ENCODE measurements at regions of chr2 and their contacts with region 1.

Region 1: DNA sequence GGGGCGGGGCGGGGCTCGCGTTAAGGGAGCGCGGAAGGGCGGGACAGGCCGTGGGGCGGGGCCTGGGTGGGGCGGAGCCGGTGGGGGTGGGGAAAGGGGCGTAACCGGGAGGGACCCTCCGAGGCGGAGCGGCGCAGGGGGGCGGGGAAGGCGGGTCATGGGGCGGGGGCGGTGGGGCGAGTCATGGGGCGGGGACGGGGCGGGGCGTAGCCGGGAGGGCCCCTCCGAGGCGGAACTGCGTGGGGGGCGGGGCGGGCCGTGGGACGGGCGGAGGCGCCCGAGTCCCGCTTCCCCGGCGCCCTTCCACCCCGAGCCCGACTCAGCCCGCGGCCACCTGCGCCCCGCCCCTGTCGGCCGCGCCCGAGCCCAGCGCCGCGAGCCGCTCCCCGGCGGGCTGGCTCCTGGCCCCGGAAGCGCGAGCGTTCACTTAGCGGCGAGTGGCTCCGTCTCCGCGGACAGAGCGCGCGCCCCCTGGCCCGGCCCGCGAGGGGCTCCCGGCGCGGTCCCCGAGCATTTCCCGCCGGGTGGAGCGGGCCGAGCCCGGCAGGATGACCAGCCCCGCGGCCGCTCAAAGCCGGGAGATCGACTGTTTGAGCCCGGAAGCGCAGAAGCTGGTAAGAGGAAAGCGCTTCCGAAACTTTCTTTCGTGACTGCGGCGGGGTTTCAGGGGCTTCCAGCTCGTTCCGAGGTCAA is 64.7 kb downstream of the LRRFIP1 start:
- DNase-seq: no peak
- ATAC-seq: peak; percentile 75
- H3K4me3 ChIP-seq: peak overlapping the region; percentile 90
- H3K27ac ChIP-seq: peak overlapping the region; percentile 90
- H3K4me1 ChIP-seq: peaks cover 15% of the 10 kb centered on the region
- H3K27me3 ChIP-seq: no peaks in the 10 kb centered on the region
- CTCF ChIP-seq: no peak
- EP300 ChIP-seq: no peak; a peak in 1 of 4 replicates
- POLR2A ChIP-seq: peak; percentile 71
- RAD21 ChIP-seq: no peak

Region 2: DNA sequence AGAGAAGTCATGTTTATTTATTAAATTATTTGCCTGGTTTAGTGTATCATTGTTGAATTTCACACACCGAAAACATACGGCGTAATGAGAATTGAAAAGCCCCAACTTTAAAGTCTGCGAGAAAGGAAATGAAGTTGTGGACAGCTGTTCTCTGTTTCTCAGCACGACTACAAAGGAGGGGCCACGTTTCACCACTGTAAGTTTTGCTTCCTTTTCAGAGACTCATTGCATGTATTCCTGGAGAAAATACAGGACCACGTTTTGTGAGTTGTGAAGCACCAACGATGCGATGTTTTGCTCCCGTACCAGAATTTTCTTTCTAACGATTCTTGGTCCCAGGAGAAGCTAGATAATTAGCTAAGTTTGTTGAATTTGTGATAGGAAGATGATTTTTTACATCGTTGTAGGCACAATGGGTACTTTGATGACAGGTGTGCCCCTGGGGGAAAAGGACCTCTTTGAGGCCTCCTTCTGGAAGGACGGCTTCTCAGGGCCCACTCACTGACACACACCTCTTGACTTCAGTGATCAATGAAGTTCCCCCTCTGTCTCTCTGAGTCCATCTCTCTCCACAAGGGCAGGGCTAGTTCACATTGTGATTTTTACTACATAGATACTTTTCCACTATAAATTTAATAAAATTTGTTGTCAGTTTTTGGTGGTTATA is 1146.1 kb before region 1 on chr2:
- CTCF ChIA-PET with region 1: no interaction called
- POLR2A ChIA-PET with region 1: no interaction called
- RAD21 ChIA-PET with region 1: no interaction called
- SMC1A ChIA-PET with region 1: no interaction called
- in situ Hi-C with region 1: no loop called
- intact Hi-C with region 1: loop called (anchors 10 kb)
- DNase-seq: peak; percentile 89
- ATAC-seq: peak; percentile 75
- H3K4me3 ChIP-seq: no peak overlapping the region; the same call in 1 of the 2 replicates
- H3K27ac ChIP-seq: peak overlapping the region; percentile 89
- H3K4me1 ChIP-seq: peaks cover 54% of the 10 kb centered on the region
- H3K27me3 ChIP-seq: no peaks in the 10 kb centered on the region
- CTCF ChIP-seq: no peak
- EP300 ChIP-seq: peak in 1 of 2 experiments; percentile 7; a peak in 2 of 4 replicates
- POLR2A ChIP-seq: no peak
- RAD21 ChIP-seq: peak; percentile 13; the same call in 1 of the 2 replicates

Region 3: DNA sequence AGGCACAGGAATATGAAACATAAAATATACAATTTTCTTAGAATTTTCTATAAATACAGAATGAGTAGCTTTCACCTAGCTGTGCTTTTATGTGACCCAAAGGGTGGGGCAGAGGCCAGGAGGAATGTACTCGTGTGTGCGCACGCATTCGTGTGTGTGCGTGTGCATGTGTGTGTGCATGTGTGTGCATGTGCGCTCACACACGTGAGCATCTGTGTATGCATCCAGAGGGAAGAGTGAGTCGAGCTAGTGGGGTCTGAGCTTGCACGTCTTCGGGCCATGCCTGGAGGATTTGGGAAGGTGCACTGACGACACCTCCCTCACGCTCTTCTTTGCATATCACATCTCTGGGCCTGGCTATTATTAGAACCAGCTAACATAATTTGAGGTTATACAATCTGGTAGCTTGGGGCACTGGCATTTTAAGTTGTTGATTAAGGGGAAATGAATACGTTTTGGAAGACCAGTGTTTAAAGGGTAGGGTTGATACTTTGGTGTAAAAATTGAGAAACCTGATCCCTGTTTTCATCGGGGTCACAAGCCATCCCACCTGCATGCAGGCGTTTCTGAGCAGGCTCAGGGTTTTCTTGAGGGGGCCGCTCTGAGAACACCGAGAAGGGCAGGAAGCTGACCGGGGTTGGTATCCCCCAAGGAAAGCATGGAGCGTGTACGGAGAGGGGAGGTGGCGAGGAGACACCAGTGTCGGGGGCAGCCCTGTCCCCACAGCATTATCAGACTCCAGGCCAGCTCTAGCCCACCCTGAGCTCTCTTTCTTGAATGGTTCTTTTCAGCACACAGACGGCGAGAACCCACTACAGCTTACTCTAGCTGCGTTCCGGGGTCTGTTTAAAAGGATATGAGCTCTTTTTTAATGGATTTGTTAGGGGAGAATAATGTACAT is 20.7 kb after region 1 on chr2:
- CTCF ChIA-PET with region 1: interaction called, 4 read pairs
- POLR2A ChIA-PET with region 1: interaction called, 6 read pairs
- RAD21 ChIA-PET with region 1: interaction called, 4 read pairs
- SMC1A ChIA-PET with region 1: interaction called, 12 read pairs
- in situ Hi-C with region 1: no loop called
- intact Hi-C with region 1: no loop called
- DNase-seq: no peak
- ATAC-seq: no peak
- H3K4me3 ChIP-seq: no peak overlapping the region
- H3K27ac ChIP-seq: no peak overlapping the region
- H3K4me1 ChIP-seq: no peaks in the 10 kb centered on the region
- H3K27me3 ChIP-seq: no peaks in the 10 kb centered on the region
- CTCF ChIP-seq: no peak
- EP300 ChIP-seq: no peak
- POLR2A ChIP-seq: peak; percentile 45; the same call in 1 of the 2 replicates
- RAD21 ChIP-seq: no peak

Region 4: GRCh38 chr2:237752761-237753165 is 60.7 kb after region 1 on chr2:
- CTCF ChIA-PET with region 1: interaction called, 88 read pairs
- POLR2A ChIA-PET with region 1: interaction called, 10 read pairs
- RAD21 ChIA-PET with region 1: interaction called, 7 read pairs
- SMC1A ChIA-PET with region 1: interaction called, 5 read pairs
- in situ Hi-C with region 1: no loop called
- intact Hi-C with region 1: loop called (anchors 2 kb)
- DNase-seq: peak; percentile 83
- ATAC-seq: peak; percentile 100
- H3K4me3 ChIP-seq: no peak overlapping the region
- H3K27ac ChIP-seq: peak overlapping the region; percentile 88
- H3K4me1 ChIP-seq: peaks cover 14% of the 10 kb centered on the region
- H3K27me3 ChIP-seq: no peaks in the 10 kb centered on the region
- CTCF ChIP-seq: no peak
- EP300 ChIP-seq: peak; percentile 40 to 60; a peak in 2 of 4 replicates
- POLR2A ChIP-seq: no peak
- RAD21 ChIP-seq: no peak

Region 5: DNA sequence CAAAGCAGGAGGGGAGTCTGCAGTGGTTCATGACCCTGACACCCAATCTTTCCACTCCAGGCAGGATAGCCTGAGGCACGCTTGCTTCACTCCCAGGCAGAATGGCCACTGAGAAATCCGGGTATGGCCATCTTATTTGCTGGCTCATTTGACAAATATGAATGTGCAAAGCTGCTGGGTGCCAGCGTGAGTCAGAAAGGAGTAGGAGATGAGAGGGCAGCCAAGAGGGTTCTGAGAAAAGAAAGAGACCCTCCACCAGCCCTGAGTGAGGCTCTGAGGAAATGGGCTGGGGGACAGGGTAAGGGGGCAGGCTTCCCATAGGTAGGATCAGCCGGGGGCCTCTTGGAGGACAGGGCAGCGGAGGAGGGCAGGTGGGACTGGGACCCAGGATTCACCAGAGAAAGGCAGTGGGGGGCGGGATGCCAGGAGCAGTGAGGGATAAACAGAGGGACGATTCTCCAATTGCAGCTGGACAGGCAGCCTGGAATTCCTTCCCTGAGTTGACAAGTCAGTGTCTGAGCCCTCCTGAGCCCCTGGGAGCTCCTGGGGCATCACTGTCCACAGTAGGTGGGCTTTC is 182.6 kb after region 1 on chr2:
- CTCF ChIA-PET with region 1: no interaction called
- POLR2A ChIA-PET with region 1: no interaction called
- RAD21 ChIA-PET with region 1: no interaction called
- SMC1A ChIA-PET with region 1: no interaction called
- in situ Hi-C with region 1: no loop called
- intact Hi-C with region 1: no loop called
- DNase-seq: no peak
- ATAC-seq: no peak
- H3K4me3 ChIP-seq: no peak overlapping the region
- H3K27ac ChIP-seq: no peak overlapping the region
- H3K4me1 ChIP-seq: no peaks in the 10 kb centered on the region; the same call in 1 of the 2 replicates
- H3K27me3 ChIP-seq: no peaks in the 10 kb centered on the region; a peak in 1 of 4 replicates
- CTCF ChIP-seq: no peak
- EP300 ChIP-seq: no peak
- POLR2A ChIP-seq: no peak
- RAD21 ChIP-seq: no peak

Region 6: GRCh38 chr2:238060542-238061314 is 368.7 kb after region 1 on chr2 and contains the start of gene SCLY:
- CTCF ChIA-PET with region 1: no interaction called
- POLR2A ChIA-PET with region 1: interaction called, 3 read pairs
- RAD21 ChIA-PET with region 1: no interaction called
- SMC1A ChIA-PET with region 1: no interaction called
- in situ Hi-C with region 1: no loop called
- intact Hi-C with region 1: loop called (anchors 10 kb)
- DNase-seq: peak; percentile 87
- ATAC-seq: peak; percentile 97
- H3K4me3 ChIP-seq: peak within 1 kb of the TSS; percentile 96
- H3K27ac ChIP-seq: peak within 1 kb of the TSS; percentile 76
- H3K4me1 ChIP-seq: no peaks in the 10 kb centered on the region; the same call in none of the 2 replicates
- H3K27me3 ChIP-seq: no peaks in the 10 kb centered on the region
- CTCF ChIP-seq: no peak
- EP300 ChIP-seq: no peak
- POLR2A ChIP-seq: peak; percentile 93
- RAD21 ChIP-seq: no peak
- polyA plus RNA-seq, gene SCLY: 3.3 to 3.6 TPM

Measured in GM12878 (cell line).